ENCODE measurements at regions of chr19 and their contacts with region 1.

Region 1: GRCh38 chr19:43532962-43533545 is at the start of gene ZNF575:
- DNase-seq: peak; percentile 70 to 93 (median 82)
- ATAC-seq: peak; percentile 60 to 70
- H3K4me3 Mint-ChIP-seq: peak within 1 kb of the TSS; percentile 88 to 100 (median 97)
- H3K27ac Mint-ChIP-seq: peak within 1 kb of the TSS; percentile 90 to 99 (median 98)
- H3K4me1 Mint-ChIP-seq: peaks cover 13 to 32% (median 20%) of the 10 kb centered on the region in 4 donors
- H3K27me3 Mint-ChIP-seq: no peaks in the 10 kb centered on the region
- polyA plus RNA-seq, gene ZNF575: 1.7 to 4.1 (median 3.0) TPM

Region 2: GRCh38 chr19:43438291-43439096 is 94.6 kb before region 1 on chr19:
- POLR2A ChIA-PET with region 1: interaction called, 26 read pairs
- DNase-seq: no peak
- ATAC-seq: peak; percentile 8 to 33
- H3K4me3 Mint-ChIP-seq: peak overlapping the region in 9 of 10 donors; percentile 19 to 66 (median 56)
- H3K27ac Mint-ChIP-seq: peak overlapping the region; percentile 74 to 98 (median 94)
- H3K4me1 Mint-ChIP-seq: peaks cover 17 to 62% (median 52%) of the 10 kb centered on the region in 4 donors
- H3K27me3 Mint-ChIP-seq: no peaks in the 10 kb centered on the region

Region 3: GRCh38 chr19:43555185-43555770 is 22.2 kb after region 1 on chr19:
- POLR2A ChIA-PET with region 1: interaction called, 11 read pairs
- DNase-seq: peak; percentile 63 to 90 (median 82)
- ATAC-seq: peak; percentile 99
- H3K4me3 Mint-ChIP-seq: peak overlapping the region in 3 of 10 donors; percentile 15 to 47 (median 20)
- H3K27ac Mint-ChIP-seq: peak overlapping the region; percentile 26 to 89 (median 70)
- H3K4me1 Mint-ChIP-seq: peaks cover 10 to 33% (median 19%) of the 10 kb centered on the region in 4 donors
- H3K27me3 Mint-ChIP-seq: no peaks in the 10 kb centered on the region

Measured in naive thymus-derived CD8-positive, alpha-beta T cell (primary cell).